GM13977 (cell line): ENCODE measurements at regions of chr22 and their contacts with region 1.

Region 1: GRCh38 chr22:48492366-48493320 is 1335.0 kb downstream of the BRD1 start:
- DNase-seq: peak; percentile 86
- CTCF ChIP-seq: peak; percentile 85

Region 2: DNA sequence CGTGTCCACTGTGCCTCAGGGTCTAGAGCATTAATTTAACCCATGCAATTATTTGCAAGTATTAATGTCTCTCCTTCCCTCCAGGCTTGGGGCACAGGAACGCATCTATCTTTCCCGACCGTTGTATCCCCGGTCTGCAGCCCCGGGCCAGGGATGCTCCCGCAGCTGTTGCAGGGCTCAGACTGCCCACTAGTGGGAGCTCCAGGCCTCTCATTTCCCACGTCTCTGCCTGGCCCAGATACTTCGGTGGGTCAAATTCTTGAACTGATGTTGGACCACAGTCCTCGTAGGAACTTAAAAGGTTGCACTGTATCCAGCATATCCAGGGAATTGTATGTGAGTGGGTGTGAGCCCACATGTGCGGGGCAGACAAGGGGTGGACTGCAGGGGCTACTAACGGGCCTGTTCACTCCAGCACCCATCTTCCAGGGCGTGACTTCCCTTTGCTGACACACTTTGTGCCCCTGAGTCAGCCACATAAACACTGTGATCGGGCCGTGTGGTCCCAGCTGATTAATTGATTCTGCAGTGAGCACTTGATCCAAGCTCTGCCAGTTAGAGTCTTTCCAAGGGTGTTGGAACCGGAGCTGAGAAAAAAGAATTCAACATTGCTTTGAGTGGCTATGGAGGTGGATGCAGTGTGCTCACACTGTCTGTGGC is 1278.9 kb before region 1 on chr22:
- in situ Hi-C with region 1: loop called (anchors 25 kb)
- DNase-seq: peak; percentile 69
- CTCF ChIP-seq: peak; percentile 85

Region 3: GRCh38 chr22:47943729-47944700 is 548.6 kb before region 1 on chr22:
- in situ Hi-C with region 1: no loop called
- DNase-seq: no peak
- CTCF ChIP-seq: no peak

Region 4: GRCh38 chr22:48098243-48098920 is 394.3 kb before region 1 on chr22:
- in situ Hi-C with region 1: loop called (anchors 25 kb)
- DNase-seq: peak; percentile 85
- CTCF ChIP-seq: no peak

Region 5: GRCh38 chr22:48757985-48758561 is 265.4 kb after region 1 on chr22:
- in situ Hi-C with region 1: no loop called
- DNase-seq: peak; percentile 9
- CTCF ChIP-seq: no peak